ENCODE measurements at regions of chr16 and their contacts with region 1.

Region 1: DNA sequence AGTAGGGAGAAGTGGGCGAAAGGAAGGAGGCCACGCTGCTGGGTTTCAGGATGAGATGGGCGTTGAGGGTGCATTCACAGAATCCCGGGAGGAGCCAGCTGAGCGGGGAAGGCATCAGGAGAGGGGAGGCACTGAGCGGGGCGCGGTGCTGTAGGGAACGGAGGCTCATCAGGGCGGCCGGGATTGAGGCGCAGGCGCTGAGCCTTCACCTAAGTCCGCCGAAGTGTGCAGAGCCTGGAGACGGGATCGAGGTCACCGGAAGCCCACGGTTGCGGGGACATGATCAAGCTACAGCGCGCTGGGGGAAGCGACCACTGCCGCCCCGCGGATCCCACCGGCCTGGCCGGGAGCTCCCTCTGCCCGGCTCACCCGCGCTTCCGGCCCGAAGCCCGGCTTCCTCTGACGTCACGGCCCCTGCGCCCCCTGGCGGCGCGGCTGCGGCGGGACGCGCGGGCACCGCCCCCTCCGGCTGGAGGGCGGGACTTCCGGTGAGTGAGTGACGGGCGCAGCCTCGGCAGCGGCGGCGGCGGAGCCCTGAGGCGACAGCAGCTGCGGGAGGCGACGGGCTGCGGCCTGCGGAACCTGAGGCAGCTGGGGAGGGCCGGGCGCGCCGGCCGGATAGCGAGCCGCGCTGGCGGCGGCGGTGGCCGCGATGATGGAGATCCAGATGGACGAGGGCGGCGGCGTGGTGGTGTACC is at the start of gene MAPK8IP3:
- DNase-seq: peak; percentile 98
- ATAC-seq: peak; percentile 84
- H3K4me3 ChIP-seq: peak within 1 kb of the TSS; percentile 75 to 98 (median 96)
- H3K4me3 Mint-ChIP-seq: peak within 1 kb of the TSS; percentile 98
- H3K27ac ChIP-seq: peak within 1 kb of the TSS; percentile 89 to 91
- H3K27ac Mint-ChIP-seq: peak within 1 kb of the TSS; percentile 98
- H3K4me1 ChIP-seq: peaks cover 14 to 30% of the 10 kb centered on the region in 2 donors
- H3K4me1 Mint-ChIP-seq: peaks cover 40% of the 10 kb centered on the region
- H3K27me3 ChIP-seq: no peaks in the 10 kb centered on the region
- H3K27me3 Mint-ChIP-seq: no peaks in the 10 kb centered on the region
- CTCF ChIP-seq: peak; percentile 89
- total RNA-seq, gene MAPK8IP3: 340 and 348 TPM in 2 replicates

Region 2: DNA sequence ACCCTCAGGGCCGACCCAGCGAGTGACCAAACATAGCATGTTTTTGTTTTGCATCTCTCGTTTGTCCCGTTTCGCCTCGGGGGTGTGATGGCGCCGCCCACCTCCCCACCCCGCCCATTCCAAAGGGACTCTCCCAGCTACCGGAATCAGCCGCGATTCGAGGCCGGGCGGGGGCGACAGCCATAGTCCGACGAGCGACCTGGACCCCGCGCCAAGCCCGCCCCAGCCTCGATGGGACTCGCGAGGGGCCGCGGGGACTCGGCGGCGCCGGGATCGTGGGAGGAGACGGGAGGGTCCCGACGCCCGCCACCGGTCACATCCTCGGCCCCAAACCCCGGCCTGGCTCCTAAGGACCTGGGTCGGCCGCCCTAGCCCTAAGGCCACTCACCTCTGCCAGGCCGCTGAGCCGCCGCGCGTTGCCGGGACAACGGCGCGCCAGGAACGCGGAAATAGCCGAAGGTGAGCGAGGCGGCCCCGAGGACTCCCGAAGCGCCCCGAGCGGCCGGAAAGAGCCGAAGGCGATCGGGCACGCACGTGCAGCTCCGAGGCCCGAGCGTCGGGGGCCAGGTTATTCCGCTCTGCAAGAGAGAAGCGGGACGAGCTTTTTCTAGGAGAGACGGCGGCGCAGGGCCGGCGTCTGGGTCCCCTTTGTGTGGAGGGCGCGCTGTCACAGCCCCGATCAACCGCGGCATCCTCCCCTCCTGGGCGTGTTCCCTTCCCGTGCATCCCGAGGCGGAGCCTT is 95.4 kb before region 1 on chr16:
- CTCF ChIA-PET with region 1: no interaction called
- POLR2A ChIA-PET with region 1: interaction called, 11 read pairs
- intact Hi-C with region 1: loop called (anchors 5 kb)
- DNase-seq: peak; percentile 95
- ATAC-seq: peak; percentile 46
- H3K4me3 ChIP-seq: peak overlapping the region in 4 of 5 experiments; percentile 61 to 75 (median 70)
- H3K4me3 Mint-ChIP-seq: peak overlapping the region; percentile 94
- H3K27ac ChIP-seq: peak overlapping the region; percentile 48 to 63
- H3K27ac Mint-ChIP-seq: peak overlapping the region; percentile 80
- H3K4me1 ChIP-seq: peaks cover 37 to 59% of the 10 kb centered on the region in 2 donors
- H3K4me1 Mint-ChIP-seq: peaks cover 39% of the 10 kb centered on the region
- H3K27me3 ChIP-seq: peaks cover 0 to 16% (median 2%) of the 10 kb centered on the region in 4 experiments
- H3K27me3 Mint-ChIP-seq: peaks cover 6% of the 10 kb centered on the region
- CTCF ChIP-seq: no peak

Region 3: GRCh38 chr16:1723450-1724147 is 17.8 kb after region 1 on chr16:
- CTCF ChIA-PET with region 1: interaction called, 11 read pairs
- POLR2A ChIA-PET with region 1: interaction called, 7 read pairs
- intact Hi-C with region 1: loop called (anchors 1 kb)
- DNase-seq: peak; percentile 74
- ATAC-seq: peak; percentile 46
- H3K4me3 ChIP-seq: no peak overlapping the region
- H3K4me3 Mint-ChIP-seq: peak overlapping the region; percentile 52
- H3K27ac ChIP-seq: peak overlapping the region; percentile 51 to 55
- H3K27ac Mint-ChIP-seq: peak overlapping the region; percentile 76
- H3K4me1 ChIP-seq: peaks cover 53 to 78% of the 10 kb centered on the region in 2 donors
- H3K4me1 Mint-ChIP-seq: peaks cover 51% of the 10 kb centered on the region
- H3K27me3 ChIP-seq: no peaks in the 10 kb centered on the region
- H3K27me3 Mint-ChIP-seq: no peaks in the 10 kb centered on the region
- CTCF ChIP-seq: peak; percentile 96

Region 4: GRCh38 chr16:1740234-1740633 is 34.4 kb after region 1 on chr16:
- CTCF ChIA-PET with region 1: no interaction called
- POLR2A ChIA-PET with region 1: no interaction called
- intact Hi-C with region 1: no loop called
- DNase-seq: no peak
- ATAC-seq: no peak
- H3K4me3 ChIP-seq: no peak overlapping the region
- H3K4me3 Mint-ChIP-seq: no peak overlapping the region
- H3K27ac ChIP-seq: no peak overlapping the region
- H3K27ac Mint-ChIP-seq: no peak overlapping the region
- H3K4me1 ChIP-seq: no peaks in the 10 kb centered on the region
- H3K4me1 Mint-ChIP-seq: no peaks in the 10 kb centered on the region
- H3K27me3 ChIP-seq: no peaks in the 10 kb centered on the region
- H3K27me3 Mint-ChIP-seq: no peaks in the 10 kb centered on the region
- CTCF ChIP-seq: no peak

Region 5: DNA sequence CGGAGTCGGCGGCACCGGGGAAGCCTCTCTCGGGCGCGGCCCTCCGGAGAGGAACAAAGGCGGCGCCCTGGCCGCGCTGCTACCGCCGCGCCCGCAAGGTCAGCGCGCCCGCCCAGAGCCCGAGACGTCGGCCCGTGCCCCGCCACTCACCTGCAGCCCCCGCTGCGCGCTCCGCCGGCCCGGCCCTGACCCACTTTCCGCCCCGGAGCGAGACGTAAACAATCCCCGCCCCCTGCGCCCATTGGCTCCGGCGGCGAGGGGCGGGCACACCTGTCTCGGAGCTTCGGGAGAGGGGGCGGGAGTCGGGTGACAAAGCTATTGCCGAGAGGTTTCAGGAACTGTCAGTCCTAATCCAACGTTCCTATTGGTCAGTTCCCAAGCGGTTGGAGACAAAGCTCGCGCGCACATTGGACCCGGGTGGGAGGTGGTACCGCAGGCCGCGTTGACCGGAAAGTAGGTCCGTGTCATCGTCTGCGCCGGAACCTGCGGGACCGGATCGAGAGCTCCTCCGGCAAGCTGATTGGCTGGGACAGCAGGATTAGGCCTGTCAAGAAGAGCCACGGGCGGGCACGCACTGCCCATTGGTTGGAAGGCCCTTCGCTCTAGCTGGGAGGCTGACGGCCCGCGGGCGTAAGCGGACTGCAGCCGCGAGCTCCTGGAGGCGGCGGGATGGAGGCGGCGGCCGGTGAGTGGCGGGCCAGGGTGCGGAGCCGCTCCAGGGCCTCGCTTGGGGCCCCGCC is 76.7 kb after region 1 on chr16 and contains the starts of genes NUBP2 and SPSB3:
- CTCF ChIA-PET with region 1: interaction called, 16 read pairs
- POLR2A ChIA-PET with region 1: interaction called, 9 read pairs
- intact Hi-C with region 1: no loop called
- DNase-seq: peak; percentile 99
- ATAC-seq: peak; percentile 85
- H3K4me3 ChIP-seq: peak within 1 kb of the TSS; percentile 75 to 96 (median 83)
- H3K4me3 Mint-ChIP-seq: peak within 1 kb of the TSS; percentile 89
- H3K27ac ChIP-seq: peak within 1 kb of the TSS; percentile 47 to 76
- H3K27ac Mint-ChIP-seq: peak within 1 kb of the TSS; percentile 91
- H3K4me1 ChIP-seq: peaks cover 10 to 31% of the 10 kb centered on the region in 2 donors
- H3K4me1 Mint-ChIP-seq: peaks cover 22% of the 10 kb centered on the region
- H3K27me3 ChIP-seq: no peaks in the 10 kb centered on the region
- H3K27me3 Mint-ChIP-seq: no peaks in the 10 kb centered on the region
- CTCF ChIP-seq: no peak
- total RNA-seq, gene NUBP2: 50.2 and 52.6 TPM in 2 replicates
- total RNA-seq, gene SPSB3: 91.2 and 95.5 TPM in 2 replicates